Right cardiac atrium (tissue), 5 donors: ENCODE measurements at regions of chr3 and their contacts with region 1.

Region 1: GRCh38 chr3:47836986-47837385 is 34.0 kb downstream of the DHX30 start:
- DNase-seq: no peak
- ATAC-seq: no peak
- H3K4me3 ChIP-seq: no peak overlapping the region
- H3K27ac ChIP-seq: no peak overlapping the region
- H3K4me1 ChIP-seq: peaks cover 2% of the 10 kb centered on the region
- H3K27me3 ChIP-seq: no peaks in the 10 kb centered on the region

Region 2: GRCh38 chr3:47989981-47990440 is 153.0 kb after region 1 on chr3:
- intact Hi-C with region 1: loop called in 3 of 4 experiments (anchors 5 to 10 kb)
- DNase-seq: peak; percentile 73 to 83 (median 76)
- ATAC-seq: peak; percentile 91 to 95
- H3K4me3 ChIP-seq: no peak overlapping the region
- H3K27ac ChIP-seq: no peak overlapping the region
- H3K4me1 ChIP-seq: peaks cover 1% of the 10 kb centered on the region
- H3K27me3 ChIP-seq: no peaks in the 10 kb centered on the region

Region 3: GRCh38 chr3:48058091-48058490 is 221.1 kb after region 1 on chr3:
- intact Hi-C with region 1: no loop called
- DNase-seq: no peak
- ATAC-seq: peak in 1 of 2 donors; percentile 44
- H3K4me3 ChIP-seq: no peak overlapping the region
- H3K27ac ChIP-seq: no peak overlapping the region
- H3K4me1 ChIP-seq: peaks cover 3% of the 10 kb centered on the region
- H3K27me3 ChIP-seq: no peaks in the 10 kb centered on the region

Region 4: GRCh38 chr3:48151058-48151806 is 314.2 kb after region 1 on chr3:
- intact Hi-C with region 1: loop called (anchors 5 to 10 kb)
- DNase-seq: peak; percentile 79 to 92 (median 90)
- ATAC-seq: peak; percentile 97
- H3K4me3 ChIP-seq: no peak overlapping the region
- H3K27ac ChIP-seq: peak overlapping the region; percentile 45
- H3K4me1 ChIP-seq: peaks cover 6% of the 10 kb centered on the region
- H3K27me3 ChIP-seq: no peaks in the 10 kb centered on the region

Region 5: DNA sequence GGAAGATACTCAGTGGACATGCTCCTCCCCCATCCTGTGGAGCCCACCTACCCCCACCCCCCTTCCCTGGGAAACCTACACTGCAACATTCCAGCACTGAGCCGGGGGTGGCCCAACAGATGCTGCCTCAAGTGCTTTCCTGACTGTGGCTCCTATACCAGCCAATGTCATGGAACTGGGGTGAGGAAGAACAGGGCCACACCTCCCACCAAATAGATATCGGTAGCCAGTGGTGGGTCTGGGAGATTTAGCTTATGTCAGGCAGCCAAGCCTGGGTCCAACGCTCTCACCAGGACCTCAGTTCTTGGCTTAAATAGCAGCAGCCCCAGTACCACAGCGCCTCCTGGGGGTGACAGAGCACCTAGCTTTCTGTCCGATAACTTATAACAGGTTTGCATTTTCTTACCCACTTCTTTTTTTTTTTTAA is 321.0 kb after region 1 on chr3:
- intact Hi-C with region 1: loop called (anchors 5 to 10 kb)
- DNase-seq: peak; percentile 68 to 85 (median 82)
- ATAC-seq: peak; percentile 66 to 68
- H3K4me3 ChIP-seq: no peak overlapping the region
- H3K27ac ChIP-seq: no peak overlapping the region
- H3K4me1 ChIP-seq: no peaks in the 10 kb centered on the region
- H3K27me3 ChIP-seq: no peaks in the 10 kb centered on the region